Calu3 (cell line): ENCODE measurements at regions of chr16 and their contacts with region 1.

Region 1: GRCh38 chr16:89700100-89700648 is 1.3 kb downstream of the SPATA2L start:
- DNase-seq: peak; percentile 100
- H3K4me3 Mint-ChIP-seq: peak overlapping the region; percentile 87
- H3K27ac Mint-ChIP-seq: peak overlapping the region; percentile 93
- H3K4me1 Mint-ChIP-seq: no peaks in the 10 kb centered on the region
- H3K27me3 Mint-ChIP-seq: no peaks in the 10 kb centered on the region
- CTCF ChIP-seq: peak; percentile 83

Region 2: GRCh38 chr16:89686520-89687091 is 13.6 kb before region 1 on chr16 and contains the start of gene CDK10:
- CTCF ChIA-PET with region 1: interaction called, 17 read pairs
- intact Hi-C with region 1: no loop called
- DNase-seq: peak; percentile 96
- H3K4me3 Mint-ChIP-seq: peak within 1 kb of the TSS; percentile 82
- H3K27ac Mint-ChIP-seq: peak within 1 kb of the TSS; percentile 65
- H3K4me1 Mint-ChIP-seq: peaks cover 10% of the 10 kb centered on the region
- H3K27me3 Mint-ChIP-seq: no peaks in the 10 kb centered on the region
- CTCF ChIP-seq: no peak
- total RNA-seq, gene CDK10: 102 and 106 TPM in 2 replicates